CD4-positive, alpha-beta T cell (primary cell): ENCODE measurements at regions of chr5 and their contacts with region 1.

Region 1: DNA sequence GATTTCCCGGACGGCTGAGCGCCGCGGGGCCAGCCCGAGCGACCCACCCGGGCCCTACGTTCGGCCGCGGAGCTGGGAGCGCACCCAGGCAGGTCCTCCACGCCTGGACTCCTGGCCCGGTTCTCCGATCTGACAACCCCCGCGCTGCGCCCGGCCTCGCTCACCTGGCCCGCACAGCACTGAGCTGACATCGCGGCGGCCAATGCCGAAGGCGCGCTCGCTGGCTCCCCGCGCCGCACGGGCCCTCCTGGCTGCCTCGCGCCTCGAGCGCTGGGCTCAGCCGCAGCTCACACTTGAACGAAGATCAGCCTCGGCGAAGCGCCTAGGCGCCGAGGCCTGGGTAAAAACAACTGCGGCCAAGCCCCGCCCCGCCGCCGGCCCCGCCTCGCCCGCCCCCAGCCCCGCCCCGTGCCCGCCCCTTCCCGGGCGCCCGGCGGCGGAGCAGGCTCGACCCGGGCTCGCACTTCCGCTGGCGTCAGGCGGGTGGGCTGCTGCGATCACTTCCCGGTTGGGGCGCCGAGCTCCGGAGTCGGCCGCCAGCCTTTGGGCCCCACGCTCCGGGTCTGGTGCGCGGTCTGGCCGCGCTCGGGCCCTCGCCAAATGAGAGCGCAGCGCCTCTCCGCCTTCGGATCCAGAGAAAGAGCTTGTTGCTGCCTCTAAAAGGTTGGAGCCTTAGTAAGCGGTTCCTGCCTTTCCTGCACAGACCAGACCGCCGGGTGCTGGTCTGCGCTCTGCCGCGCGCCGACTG is at the start of gene SERINC5:
- DNase-seq: peak; percentile 70 to 92 (median 82)
- ATAC-seq: peak; percentile 67
- H3K4me3 ChIP-seq: peak within 1 kb of the TSS; percentile 99
- H3K4me3 Mint-ChIP-seq: peak within 1 kb of the TSS; percentile 94
- H3K27ac ChIP-seq: peak within 1 kb of the TSS; percentile 88 to 89
- H3K27ac Mint-ChIP-seq: peak within 1 kb of the TSS; percentile 92
- H3K4me1 ChIP-seq: peaks cover 53% of the 10 kb centered on the region
- H3K4me1 Mint-ChIP-seq: peaks cover 66% of the 10 kb centered on the region
- H3K27me3 ChIP-seq: no peaks in the 10 kb centered on the region
- H3K27me3 Mint-ChIP-seq: no peaks in the 10 kb centered on the region
- CTCF ChIP-seq: no peak
- total RNA-seq, gene SERINC5: 115 to 123 TPM

Region 2: DNA sequence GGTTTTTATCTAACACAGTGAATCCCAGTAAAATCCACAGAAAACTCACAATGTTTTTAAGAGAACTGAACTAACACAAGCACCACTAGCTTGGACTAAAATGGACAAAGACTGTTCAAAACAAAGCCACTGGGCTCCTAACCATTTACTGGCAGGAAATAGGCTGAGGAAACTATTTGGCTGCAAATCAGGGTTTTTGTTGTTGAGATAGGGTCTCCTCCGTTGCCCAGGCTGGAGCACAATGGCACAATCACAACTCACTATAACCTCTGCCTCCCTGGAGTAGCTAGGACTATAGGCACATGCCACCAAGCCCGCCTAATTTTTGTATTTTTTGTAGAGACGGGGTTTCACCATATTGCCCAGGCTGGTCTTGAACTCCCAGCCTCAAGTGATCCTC is 121.0 kb before region 1 on chr5:
- CTCF ChIA-PET with region 1: interaction called, 3 read pairs
- POLR2A ChIA-PET with region 1: interaction called, 58 read pairs
- intact Hi-C with region 1: loop called (anchors 2 to 5 kb)
- DNase-seq: no peak
- ATAC-seq: no peak
- H3K4me3 ChIP-seq: no peak overlapping the region
- H3K4me3 Mint-ChIP-seq: peak overlapping the region; percentile 47
- H3K27ac ChIP-seq: peak overlapping the region; percentile 65 to 66
- H3K27ac Mint-ChIP-seq: peak overlapping the region; percentile 95
- H3K4me1 ChIP-seq: peaks cover 78% of the 10 kb centered on the region
- H3K4me1 Mint-ChIP-seq: peaks cover 95% of the 10 kb centered on the region
- H3K27me3 ChIP-seq: no peaks in the 10 kb centered on the region
- H3K27me3 Mint-ChIP-seq: no peaks in the 10 kb centered on the region
- CTCF ChIP-seq: no peak

Region 3: DNA sequence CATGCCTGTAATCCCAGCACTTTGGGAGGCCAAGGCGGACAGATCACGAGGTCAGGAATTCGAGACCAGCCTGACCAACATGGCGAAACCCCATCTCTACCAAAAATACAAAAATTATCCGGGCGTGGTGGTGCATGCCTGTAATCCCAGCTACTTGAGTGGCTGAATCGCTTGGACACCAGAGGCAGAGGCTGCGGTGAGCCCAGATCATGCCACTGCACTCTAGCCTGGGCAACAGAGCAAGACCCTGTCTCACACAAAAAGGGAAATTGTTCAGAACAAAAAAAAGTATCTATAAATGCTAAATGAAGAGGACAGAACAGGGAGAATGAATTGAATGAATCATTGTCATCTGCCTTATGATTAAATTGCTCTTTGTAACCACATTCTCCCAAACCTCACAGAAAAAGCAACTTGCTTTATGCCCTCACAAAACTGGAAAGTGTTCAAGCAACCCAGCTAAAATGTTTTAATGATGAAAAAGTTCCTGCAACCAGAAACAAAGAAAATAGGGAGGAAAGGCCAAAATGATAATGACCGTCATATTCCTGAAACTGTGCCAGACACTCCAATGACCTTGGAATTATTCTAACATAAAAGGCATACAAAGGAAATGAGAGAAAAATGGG is 83.7 kb before region 1 on chr5:
- CTCF ChIA-PET with region 1: no interaction called
- POLR2A ChIA-PET with region 1: interaction called, 14 read pairs
- intact Hi-C with region 1: no loop called
- DNase-seq: no peak
- ATAC-seq: no peak
- H3K4me3 ChIP-seq: no peak overlapping the region
- H3K4me3 Mint-ChIP-seq: no peak overlapping the region
- H3K27ac ChIP-seq: no peak overlapping the region
- H3K27ac Mint-ChIP-seq: peak overlapping the region; percentile 78
- H3K4me1 ChIP-seq: peaks cover 14% of the 10 kb centered on the region
- H3K4me1 Mint-ChIP-seq: peaks cover 48% of the 10 kb centered on the region
- H3K27me3 ChIP-seq: no peaks in the 10 kb centered on the region
- H3K27me3 Mint-ChIP-seq: no peaks in the 10 kb centered on the region
- CTCF ChIP-seq: no peak

Region 4: DNA sequence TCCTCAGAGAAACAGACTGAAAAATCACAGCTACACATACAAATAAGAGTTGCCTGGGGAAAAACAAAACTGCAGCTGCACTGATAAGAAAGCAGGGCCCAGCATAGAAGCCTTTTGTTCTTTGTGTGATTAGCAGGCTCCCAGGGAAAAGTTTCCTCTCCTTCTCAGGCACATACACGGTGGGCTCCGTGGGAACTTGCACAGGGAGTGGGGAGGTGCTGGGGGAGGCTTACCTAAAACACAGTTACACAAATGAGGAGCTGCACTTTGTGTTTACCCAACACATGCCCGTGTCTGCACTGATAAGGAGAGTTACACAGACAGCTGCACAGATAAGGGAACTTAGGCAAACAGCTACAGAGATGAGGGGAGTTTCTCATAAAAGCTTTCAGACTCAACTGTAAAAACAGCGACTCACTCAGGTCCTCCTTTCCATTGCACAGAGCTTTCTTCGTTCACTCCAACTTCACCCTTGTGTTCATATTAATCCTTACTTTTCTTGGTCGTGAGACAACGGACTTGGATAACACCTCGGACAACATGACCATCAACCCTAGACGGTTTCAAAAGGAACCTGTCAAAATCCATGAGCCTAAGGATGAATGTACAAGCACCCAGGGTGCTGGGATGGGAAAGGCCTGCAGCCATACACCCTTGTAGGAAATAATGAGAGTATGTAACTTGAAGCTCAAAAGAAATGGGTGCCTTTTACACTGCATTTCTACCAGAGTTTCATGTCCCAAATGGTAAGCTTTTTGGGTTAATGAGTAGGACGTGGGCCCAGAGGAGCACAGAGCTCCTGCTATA is 50.9 kb before region 1 on chr5:
- CTCF ChIA-PET with region 1: interaction called, 3 read pairs
- POLR2A ChIA-PET with region 1: interaction called, 25 read pairs
- intact Hi-C with region 1: loop called in 1 of 2 experiments (anchors 5 kb)
- DNase-seq: peak in 2 of 14 experiments; percentile 51 to 63
- ATAC-seq: peak; percentile 87
- H3K4me3 ChIP-seq: no peak overlapping the region
- H3K4me3 Mint-ChIP-seq: peak overlapping the region; percentile 65
- H3K27ac ChIP-seq: peak overlapping the region; percentile 47 to 61
- H3K27ac Mint-ChIP-seq: peak overlapping the region; percentile 80
- H3K4me1 ChIP-seq: peaks cover 64% of the 10 kb centered on the region
- H3K4me1 Mint-ChIP-seq: peaks cover 92% of the 10 kb centered on the region
- H3K27me3 ChIP-seq: no peaks in the 10 kb centered on the region
- H3K27me3 Mint-ChIP-seq: no peaks in the 10 kb centered on the region
- CTCF ChIP-seq: no peak

Region 5: DNA sequence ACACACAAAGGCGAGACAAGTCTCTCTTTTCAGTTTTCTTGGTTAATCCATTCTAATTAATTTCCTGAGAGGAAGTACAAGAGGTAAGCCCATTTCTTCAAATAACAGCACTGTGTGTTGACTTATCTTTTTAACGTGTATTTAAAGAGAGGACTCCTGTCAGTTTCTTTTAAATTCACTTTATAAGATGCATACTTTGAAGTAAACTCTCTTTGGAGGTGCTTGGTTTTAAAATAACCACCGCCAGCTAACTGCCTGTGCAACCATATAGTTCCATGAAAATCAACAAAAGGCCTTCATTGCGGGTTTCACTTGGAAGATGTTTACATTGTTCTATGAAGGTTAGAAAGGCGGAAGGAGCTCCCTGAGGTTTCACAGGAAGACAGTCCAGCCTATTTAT is 13.0 kb after region 1 on chr5:
- CTCF ChIA-PET with region 1: interaction called, 6 read pairs
- POLR2A ChIA-PET with region 1: interaction called, 107 read pairs
- intact Hi-C with region 1: loop called in 1 of 2 experiments (anchors 1 kb)
- DNase-seq: no peak
- ATAC-seq: peak; percentile 35
- H3K4me3 ChIP-seq: no peak overlapping the region
- H3K4me3 Mint-ChIP-seq: peak overlapping the region; percentile 81
- H3K27ac ChIP-seq: peak overlapping the region in 1 of 2 donors; percentile 5
- H3K27ac Mint-ChIP-seq: peak overlapping the region; percentile 99
- H3K4me1 ChIP-seq: peaks cover 40% of the 10 kb centered on the region
- H3K4me1 Mint-ChIP-seq: peaks cover 56% of the 10 kb centered on the region
- H3K27me3 ChIP-seq: no peaks in the 10 kb centered on the region
- H3K27me3 Mint-ChIP-seq: no peaks in the 10 kb centered on the region
- CTCF ChIP-seq: no peak

Region 6: DNA sequence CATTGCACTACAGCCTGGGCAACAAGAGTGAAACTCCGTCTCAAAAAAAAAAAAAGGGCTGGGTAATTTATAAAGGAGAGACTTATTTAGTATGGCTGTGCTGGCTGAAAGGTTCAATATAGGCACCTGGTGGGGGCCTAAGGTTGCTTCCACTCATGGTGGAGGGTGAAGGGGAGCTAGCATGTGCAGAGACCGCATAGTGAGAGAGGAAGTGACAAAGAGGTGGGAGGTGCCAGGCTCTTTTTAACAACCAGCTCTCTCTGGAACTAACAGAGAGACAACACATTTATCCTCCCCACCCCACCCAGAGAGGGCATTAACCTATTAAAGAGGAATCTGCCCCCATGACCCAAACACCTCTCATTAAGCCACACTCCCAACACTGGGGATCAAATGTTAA is 28.8 kb after region 1 on chr5:
- CTCF ChIA-PET with region 1: no interaction called
- POLR2A ChIA-PET with region 1: no interaction called
- intact Hi-C with region 1: no loop called
- DNase-seq: peak in 9 of 14 experiments; percentile 7 to 57 (median 18)
- ATAC-seq: peak; percentile 91
- H3K4me3 ChIP-seq: no peak overlapping the region
- H3K4me3 Mint-ChIP-seq: no peak overlapping the region
- H3K27ac ChIP-seq: no peak overlapping the region
- H3K27ac Mint-ChIP-seq: peak overlapping the region; percentile 19
- H3K4me1 ChIP-seq: peaks cover 7% of the 10 kb centered on the region
- H3K4me1 Mint-ChIP-seq: peaks cover 13% of the 10 kb centered on the region
- H3K27me3 ChIP-seq: no peaks in the 10 kb centered on the region
- H3K27me3 Mint-ChIP-seq: no peaks in the 10 kb centered on the region
- CTCF ChIP-seq: no peak